ENCODE measurements at regions of chr7 and their contacts with region 1.

Region 1: DNA sequence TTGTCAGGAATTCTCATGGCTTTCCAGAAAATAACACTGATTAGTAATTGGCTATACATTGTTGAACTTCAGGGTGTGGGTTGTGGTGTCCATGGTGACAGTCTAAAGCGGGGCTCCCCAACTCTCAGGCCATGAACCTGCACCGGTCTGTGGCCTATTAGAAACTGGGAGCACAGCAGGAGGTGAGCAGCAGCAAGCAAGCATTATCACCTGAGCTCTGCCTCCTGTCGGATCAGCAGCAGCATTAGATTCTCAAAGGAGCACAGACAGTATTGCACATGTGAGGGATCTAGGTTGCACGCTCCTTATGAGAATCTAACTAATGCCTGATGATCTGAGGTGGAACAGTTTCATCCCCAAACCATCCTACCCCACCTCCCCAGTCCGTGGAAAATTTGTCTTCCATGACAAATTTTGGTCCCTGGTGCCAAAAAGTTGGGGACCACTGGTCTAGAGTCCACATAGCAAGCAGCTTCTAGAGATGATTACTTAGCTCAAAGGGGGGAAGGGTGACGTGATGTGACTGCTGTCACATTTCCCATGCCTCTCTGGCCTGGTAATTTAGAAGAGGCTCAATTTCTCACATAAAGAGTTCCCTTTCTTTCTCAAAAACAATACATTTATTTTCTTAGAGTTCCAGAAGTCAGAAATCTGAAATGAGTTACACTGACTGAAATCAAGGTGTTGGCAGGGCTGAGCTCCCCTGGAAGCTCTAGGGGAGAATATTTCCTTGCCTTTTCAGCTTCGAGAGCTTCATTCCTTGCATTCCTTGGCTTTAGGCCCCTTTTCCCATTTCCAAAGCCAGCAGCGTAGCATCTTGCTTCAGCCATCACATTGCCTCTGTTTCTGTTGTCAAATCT is 17.6 kb upstream of the FAM221A start:
- DNase-seq: peak; percentile 30
- ATAC-seq: peak; percentile 88
- H3K4me3 Mint-ChIP-seq: peak overlapping the region; percentile 29
- H3K27ac Mint-ChIP-seq: peak overlapping the region; percentile 91
- H3K4me1 Mint-ChIP-seq: peaks cover 39% of the 10 kb centered on the region
- H3K27me3 Mint-ChIP-seq: no peaks in the 10 kb centered on the region; the same call in 1 of the 2 replicates
- CTCF ChIP-seq: no peak

Region 2: GRCh38 chr7:23431702-23432199 is 230.6 kb before region 1 on chr7:
- CTCF ChIA-PET with region 1: no interaction called
- POLR2A ChIA-PET with region 1: no interaction called
- DNase-seq: no peak
- ATAC-seq: 0 out of 2 replicates have a peak, but pooled peaks have one; percentile 10
- H3K4me3 Mint-ChIP-seq: no peak overlapping the region
- H3K27ac Mint-ChIP-seq: peak overlapping the region; percentile 90
- H3K4me1 Mint-ChIP-seq: peaks cover 64% of the 10 kb centered on the region
- H3K27me3 Mint-ChIP-seq: no peaks in the 10 kb centered on the region
- CTCF ChIP-seq: no peak

Region 3: GRCh38 chr7:23679898-23680413 is 17.6 kb after region 1 on chr7 and contains the start of gene FAM221A:
- CTCF ChIA-PET with region 1: interaction called, 19 read pairs
- POLR2A ChIA-PET with region 1: interaction called, 3 read pairs
- DNase-seq: peak; percentile 94
- ATAC-seq: peak; percentile 94
- H3K4me3 Mint-ChIP-seq: peak within 1 kb of the TSS; percentile 86
- H3K27ac Mint-ChIP-seq: peak within 1 kb of the TSS; percentile 91
- H3K4me1 Mint-ChIP-seq: peaks cover 18% of the 10 kb centered on the region
- H3K27me3 Mint-ChIP-seq: peaks cover 21% of the 10 kb centered on the region
- CTCF ChIP-seq: peak; percentile 48
- total RNA-seq, gene FAM221A: 22.6 to 24.9 TPM (median 23.3 TPM) in 3 replicates